Activated CD4-positive, alpha-beta T cell treated with anti-CD3 and anti-CD28 coated beads, Interleukin-2, amount 10 ng/mL, durations not matched to agents 24 days and 14 days (primary cell): ENCODE measurements at regions of chr1 and their contacts with region 1.

Region 1: DNA sequence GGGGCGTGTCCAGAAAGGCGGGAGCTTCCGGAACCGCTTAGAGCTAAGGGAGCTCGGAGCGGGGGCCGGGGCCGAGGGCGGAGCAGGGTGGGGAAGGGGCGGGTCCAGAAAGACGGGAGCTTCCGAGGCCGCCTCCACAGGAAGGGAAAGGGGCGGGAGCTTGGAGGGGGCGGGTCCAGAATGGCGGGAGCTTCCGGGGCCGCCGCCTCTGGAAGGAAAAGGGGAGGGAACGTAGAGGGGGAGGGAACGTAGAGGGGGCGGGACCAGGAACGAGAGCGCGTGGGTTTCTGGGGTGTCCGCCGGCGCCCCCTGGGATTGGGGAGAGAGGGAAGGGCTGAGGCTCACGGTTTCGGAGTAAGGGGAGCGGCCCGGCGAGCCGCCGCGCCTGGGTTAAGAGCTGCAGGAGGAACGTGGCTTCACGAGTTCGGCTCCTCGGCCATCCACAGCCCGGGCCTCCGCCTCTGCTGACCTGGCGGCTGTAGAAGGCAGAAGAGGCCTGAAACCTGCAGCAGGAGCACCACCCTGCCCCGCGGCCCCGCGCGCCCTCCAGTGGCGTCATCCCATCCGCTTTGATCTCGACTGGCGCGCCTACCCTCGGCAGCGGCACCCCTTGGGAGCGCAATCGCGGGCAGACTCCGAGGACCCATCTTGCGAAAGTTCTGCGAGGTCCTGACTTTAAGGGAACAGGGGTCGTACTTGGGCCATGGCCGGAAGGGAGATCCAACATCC is 22.9 kb upstream of the HPDL start:
- DNase-seq: peak; percentile 97
- H3K4me3 Mint-ChIP-seq: peak overlapping the region; percentile 96
- H3K27ac Mint-ChIP-seq: peak overlapping the region; percentile 97
- H3K4me1 Mint-ChIP-seq: peaks cover 39% of the 10 kb centered on the region
- H3K27me3 Mint-ChIP-seq: no peaks in the 10 kb centered on the region

Region 2: GRCh38 chr1:44835738-44836675 is 467.7 kb before region 1 on chr1:
- intact Hi-C with region 1: loop called (anchors 1 kb)
- DNase-seq: peak; percentile 95
- H3K4me3 Mint-ChIP-seq: no peak overlapping the region
- H3K27ac Mint-ChIP-seq: peak overlapping the region; percentile 39
- H3K4me1 Mint-ChIP-seq: peaks cover 13% of the 10 kb centered on the region
- H3K27me3 Mint-ChIP-seq: no peaks in the 10 kb centered on the region

Region 3: GRCh38 chr1:45018599-45019230 is 285.0 kb before region 1 on chr1:
- intact Hi-C with region 1: loop called (anchors 1 kb)
- DNase-seq: peak; percentile 89
- H3K4me3 Mint-ChIP-seq: no peak overlapping the region
- H3K27ac Mint-ChIP-seq: no peak overlapping the region
- H3K4me1 Mint-ChIP-seq: peaks cover 15% of the 10 kb centered on the region
- H3K27me3 Mint-ChIP-seq: peaks cover 4% of the 10 kb centered on the region

Region 4: DNA sequence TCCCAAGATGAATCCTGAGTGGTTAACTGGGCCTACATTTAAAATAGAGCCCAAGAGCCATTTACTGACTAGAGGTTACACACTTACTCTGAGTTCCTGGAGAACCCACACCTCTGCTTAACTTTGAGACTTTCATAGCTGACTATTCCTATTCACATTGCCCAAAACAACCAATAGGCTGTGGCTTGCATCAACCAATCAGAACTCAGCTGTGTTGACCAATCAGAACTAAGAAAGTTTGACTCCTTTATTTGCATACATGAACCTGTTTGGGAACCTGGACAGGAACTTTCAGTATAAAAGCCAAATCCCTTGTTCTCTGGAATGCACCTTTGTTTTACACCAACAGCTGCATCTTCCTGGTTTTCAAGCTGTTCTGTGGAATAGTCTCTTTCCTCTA is 106.9 kb before region 1 on chr1:
- intact Hi-C with region 1: no loop called
- DNase-seq: no peak
- H3K4me3 Mint-ChIP-seq: no peak overlapping the region
- H3K27ac Mint-ChIP-seq: no peak overlapping the region
- H3K4me1 Mint-ChIP-seq: no peaks in the 10 kb centered on the region
- H3K27me3 Mint-ChIP-seq: peaks cover 23% of the 10 kb centered on the region

Region 5: GRCh38 chr1:45339789-45340570 is 36.2 kb after region 1 on chr1 and contains the starts of genes MUTYH and TOE1:
- intact Hi-C with region 1: loop called (anchors 1 kb)
- DNase-seq: peak; percentile 98
- H3K4me3 Mint-ChIP-seq: peak within 1 kb of the TSS; percentile 98
- H3K27ac Mint-ChIP-seq: peak within 1 kb of the TSS; percentile 99
- H3K4me1 Mint-ChIP-seq: peaks cover 45% of the 10 kb centered on the region
- H3K27me3 Mint-ChIP-seq: no peaks in the 10 kb centered on the region
- total RNA-seq, gene MUTYH: 55.6 and 57.0 TPM in 2 replicates
- total RNA-seq, gene TOE1: 38.2 and 44.8 TPM in 2 replicates

Region 6: DNA sequence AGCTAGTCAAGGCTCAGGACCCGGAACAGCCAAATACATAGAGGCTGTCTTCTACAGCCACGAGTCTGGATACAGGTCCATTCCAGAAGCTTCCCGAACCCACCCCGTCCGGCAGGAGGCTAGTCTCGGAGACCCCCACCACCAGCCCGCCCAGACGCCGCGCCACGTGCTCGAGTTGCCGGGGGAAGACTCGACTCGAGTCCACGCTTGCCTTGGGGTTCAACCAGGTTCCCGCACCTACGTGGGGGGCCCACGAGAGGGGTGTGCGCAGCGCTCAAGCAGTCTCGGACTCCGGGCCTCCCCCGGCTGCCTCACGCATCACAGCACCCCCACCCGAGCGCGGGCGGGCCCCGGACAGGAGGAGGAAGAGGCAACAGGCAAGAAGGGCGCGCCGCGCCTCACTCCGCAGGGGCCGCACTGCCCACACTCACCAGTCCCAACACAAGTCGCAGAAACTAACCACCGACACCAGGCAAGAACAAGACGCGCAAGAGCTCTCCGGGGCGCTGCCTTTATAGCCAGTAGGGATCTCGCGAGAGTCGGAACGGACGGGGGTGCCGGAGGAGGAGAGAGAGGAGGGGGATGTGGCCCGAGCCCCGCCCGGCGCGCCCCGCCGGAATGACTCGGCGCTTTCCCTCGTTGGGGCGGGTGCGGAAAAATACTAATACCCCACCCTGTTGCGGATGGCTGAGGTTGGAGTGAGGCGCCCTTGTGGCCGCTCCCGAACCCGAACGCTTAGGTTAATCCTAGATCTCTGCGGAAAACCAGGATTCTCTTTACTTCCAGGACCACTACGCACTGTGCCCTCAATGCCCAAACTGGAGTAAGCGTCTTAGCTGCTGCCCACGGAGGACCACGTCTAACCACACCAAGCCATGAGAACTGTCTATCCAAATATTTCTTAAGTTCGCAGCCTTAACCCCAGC is 217.9 kb after region 1 on chr1 and contains the start of gene PRDX1:
- intact Hi-C with region 1: loop called (anchors 1 kb)
- DNase-seq: peak; percentile 99
- H3K4me3 Mint-ChIP-seq: peak within 1 kb of the TSS; percentile 99
- H3K27ac Mint-ChIP-seq: peak within 1 kb of the TSS; percentile 94
- H3K4me1 Mint-ChIP-seq: peaks cover 31% of the 10 kb centered on the region
- H3K27me3 Mint-ChIP-seq: peaks cover 2% of the 10 kb centered on the region
- total RNA-seq, gene PRDX1: 682 and 710 TPM in 2 replicates